ENCODE measurements at regions of chr2 and their contacts with region 1.

Region 1: DNA sequence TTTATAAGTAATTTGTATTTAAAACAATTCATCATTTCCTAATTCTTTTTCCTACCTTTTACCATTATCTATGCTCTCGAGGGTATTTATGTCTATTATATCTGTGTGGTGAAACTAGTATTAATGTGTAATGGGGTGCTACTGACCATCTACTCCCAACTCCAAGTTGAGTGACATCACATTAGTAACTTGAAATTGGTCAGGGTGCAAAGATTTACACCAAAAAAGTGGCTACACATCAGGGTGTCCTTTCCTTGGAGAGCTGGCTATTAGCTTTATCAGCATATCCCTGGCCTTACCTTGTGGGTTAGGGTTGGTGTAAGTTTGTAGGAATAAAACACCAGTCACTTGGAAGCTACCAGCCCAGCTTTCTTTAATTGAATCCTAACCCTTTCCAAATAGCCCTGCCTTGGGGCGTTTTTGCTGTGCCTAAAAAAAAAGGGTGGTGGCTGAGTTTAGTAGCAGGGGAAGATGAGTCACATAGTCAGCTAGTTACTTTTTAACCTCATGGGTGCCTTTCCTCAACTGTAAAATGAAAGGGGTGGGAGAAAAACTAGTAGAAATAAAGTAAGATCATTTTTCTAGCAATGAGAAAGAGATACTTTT is 14.0 kb downstream of the ANXA4 start:
- DNase-seq: peak in 1 of 2 donors; percentile 45
- H3K4me3 ChIP-seq: no peak overlapping the region
- H3K27ac ChIP-seq: peak overlapping the region in 1 of 2 donors; percentile 61
- H3K4me1 ChIP-seq: peaks cover 0 to 16% of the 10 kb centered on the region in 2 donors
- H3K27me3 ChIP-seq: no peaks in the 10 kb centered on the region
- CTCF ChIP-seq: no peak
- POLR2A ChIP-seq: no peak

Region 2: DNA sequence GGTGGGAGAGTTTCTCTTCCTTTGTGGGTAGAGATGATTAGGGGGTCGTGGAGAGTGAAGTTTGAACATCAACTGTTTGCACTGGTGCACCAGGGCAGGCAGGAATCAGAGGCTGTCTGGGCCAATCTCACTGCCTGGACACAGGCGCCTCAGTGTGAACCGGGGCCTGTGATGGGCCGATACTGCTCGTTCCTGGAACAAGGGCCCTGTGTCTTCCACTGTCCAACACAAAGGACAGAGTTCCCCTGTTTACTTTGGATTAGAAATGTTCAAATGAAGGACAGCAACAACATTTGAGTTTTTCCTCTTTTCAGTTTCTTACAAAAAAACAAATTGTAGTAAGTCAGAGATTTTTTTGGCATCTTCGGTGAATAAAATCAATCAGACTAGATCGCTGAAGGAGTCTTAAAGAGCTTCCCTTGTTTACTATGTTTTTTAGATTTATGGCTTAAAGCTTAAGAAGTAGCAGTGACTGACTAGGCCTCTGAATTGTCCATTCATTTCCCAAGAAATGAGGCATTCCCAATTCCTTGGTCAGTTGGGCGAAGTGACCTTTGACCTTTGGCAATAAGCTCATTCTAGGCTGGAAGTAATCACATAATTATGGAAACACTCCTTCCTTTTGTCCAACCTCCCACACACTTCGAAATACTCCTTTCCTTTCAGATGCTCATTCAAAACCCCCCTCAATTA is 809.2 kb after region 1 on chr2:
- intact Hi-C with region 1: loop called (anchors 10 kb)
- DNase-seq: no peak
- H3K4me3 ChIP-seq: no peak overlapping the region
- H3K27ac ChIP-seq: no peak overlapping the region
- H3K4me1 ChIP-seq: no peaks in the 10 kb centered on the region
- H3K27me3 ChIP-seq: no peaks in the 10 kb centered on the region
- CTCF ChIP-seq: no peak
- POLR2A ChIP-seq: no peak

Measured in breast epithelium (tissue), 4 donors.